ENCODE measurements at regions of chr2 and their contacts with region 1.

Region 1: DNA sequence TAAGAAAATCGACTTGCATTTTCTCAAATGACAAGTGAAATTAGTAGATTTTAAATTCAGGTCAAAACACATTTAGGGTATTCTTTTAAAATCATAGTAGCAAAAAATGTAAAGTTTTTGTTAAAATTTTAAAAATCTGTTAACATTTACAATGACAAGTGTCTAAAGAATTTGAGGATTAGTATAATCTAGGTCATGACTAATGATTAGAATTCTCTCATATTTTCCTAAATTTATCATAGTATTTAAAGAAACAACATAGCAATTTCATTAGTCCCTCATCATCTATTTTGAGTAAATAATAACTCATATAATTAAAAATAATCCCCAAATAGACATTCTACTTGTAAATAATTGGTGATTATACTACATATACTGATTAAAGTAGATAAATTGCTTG is 23.6 kb downstream of the THUMPD2 start:
- DNase-seq: no peak
- H3K4me3 ChIP-seq: no peak overlapping the region
- H3K27ac ChIP-seq: no peak overlapping the region
- H3K4me1 ChIP-seq: no peaks in the 10 kb centered on the region
- H3K27me3 ChIP-seq: no peaks in the 10 kb centered on the region
- CTCF ChIP-seq: no peak

Region 2: DNA sequence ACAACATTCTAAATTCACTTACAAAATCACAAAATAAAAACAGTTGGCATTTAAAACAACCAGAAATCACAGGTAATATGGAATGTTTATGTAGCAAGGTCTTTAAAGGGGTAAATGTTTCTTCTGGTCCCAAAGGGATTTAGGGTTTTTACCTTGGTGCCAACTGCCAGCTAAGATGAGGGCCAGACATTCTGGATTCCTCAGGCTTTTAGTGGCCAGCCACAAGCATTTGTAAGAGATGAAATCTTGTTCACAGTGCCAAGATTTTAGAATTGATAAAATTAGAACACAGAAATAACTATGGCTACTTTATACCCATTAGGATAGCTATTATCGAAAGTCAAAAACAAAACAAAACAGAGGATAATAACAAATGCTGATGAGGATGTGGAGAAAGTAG is 451.3 kb before region 1 on chr2:
- CTCF ChIA-PET with region 1: no interaction called
- POLR2A ChIA-PET with region 1: interaction called, 15 read pairs
- intact Hi-C with region 1: no loop called
- DNase-seq: no peak
- H3K4me3 ChIP-seq: no peak overlapping the region
- H3K27ac ChIP-seq: no peak overlapping the region
- H3K4me1 ChIP-seq: no peaks in the 10 kb centered on the region
- H3K27me3 ChIP-seq: no peaks in the 10 kb centered on the region
- CTCF ChIP-seq: no peak